Activated CD4-positive, alpha-beta memory T cell treated with anti-CD3 and anti-CD28 coated beads, Interleukin-2, amount 10 ng/mL, durations not matched to agents 7 days and 5 days (primary cell): ENCODE measurements at regions of chr14 and their contacts with region 1.

Region 1: DNA sequence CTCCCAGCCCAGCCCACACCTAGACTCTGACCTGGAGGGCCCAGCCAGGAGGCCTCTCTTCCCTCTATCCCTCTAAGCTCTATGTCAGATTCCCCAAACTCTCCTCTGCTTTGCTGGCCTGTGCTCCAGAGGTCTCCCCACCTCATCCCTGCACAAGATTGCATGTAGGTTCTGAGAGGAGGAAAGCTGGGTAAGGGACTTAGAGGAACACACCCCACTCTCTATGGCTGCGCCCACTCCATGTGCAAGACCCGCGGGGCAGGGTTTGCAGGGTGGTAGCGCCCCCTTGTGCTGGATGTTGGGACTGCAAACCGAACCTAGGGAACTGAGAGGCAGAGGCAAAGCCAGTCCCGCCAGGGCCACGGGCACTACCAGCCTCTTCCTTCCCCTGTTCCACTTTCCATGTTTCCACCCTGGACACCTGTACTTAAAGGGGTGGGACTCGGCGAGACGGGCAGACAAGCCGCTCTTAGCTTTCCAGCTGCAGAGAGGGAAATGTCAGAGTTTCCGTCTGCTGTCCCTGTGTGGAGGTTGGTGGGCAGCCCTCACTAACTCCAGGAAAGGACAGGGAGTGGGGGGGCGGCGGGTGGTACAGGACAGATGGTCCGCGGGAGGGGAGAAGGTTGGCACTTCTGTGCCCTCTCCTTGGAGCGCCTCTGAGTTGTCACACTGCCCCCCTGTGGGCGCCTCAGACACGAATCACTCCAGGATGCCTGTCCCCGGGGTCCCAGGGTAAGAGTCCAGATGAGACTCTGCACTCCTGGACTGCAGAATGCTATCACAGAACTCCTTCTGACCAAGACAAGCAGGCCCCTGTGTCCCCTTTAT is 16.8 kb downstream of the MMP14 start:
- DNase-seq: peak; percentile 90
- H3K4me3 Mint-ChIP-seq: peak overlapping the region; percentile 68
- H3K27ac Mint-ChIP-seq: peak overlapping the region; percentile 44
- H3K4me1 Mint-ChIP-seq: peaks cover 46% of the 10 kb centered on the region
- H3K27me3 Mint-ChIP-seq: peaks cover 23% of the 10 kb centered on the region

Region 2: GRCh38 chr14:22822571-22823098 is 30.5 kb before region 1 on chr14:
- CTCF ChIA-PET with region 1: interaction called, 195 read pairs
- POLR2A ChIA-PET with region 1: interaction called, 5 read pairs
- DNase-seq: peak; percentile 71
- H3K4me3 Mint-ChIP-seq: peak overlapping the region; percentile 39
- H3K27ac Mint-ChIP-seq: no peak overlapping the region
- H3K4me1 Mint-ChIP-seq: peaks cover 36% of the 10 kb centered on the region
- H3K27me3 Mint-ChIP-seq: peaks cover 19% of the 10 kb centered on the region

Region 3: GRCh38 chr14:22836301-22837113 is 16.6 kb before region 1 on chr14 and contains the start of gene MMP14:
- CTCF ChIA-PET with region 1: interaction called, 62 read pairs
- POLR2A ChIA-PET with region 1: interaction called, 5 read pairs
- DNase-seq: no peak
- H3K4me3 Mint-ChIP-seq: no peak within 1 kb of the TSS
- H3K27ac Mint-ChIP-seq: no peak within 1 kb of the TSS
- H3K4me1 Mint-ChIP-seq: peaks cover 11% of the 10 kb centered on the region
- H3K27me3 Mint-ChIP-seq: peaks cover 15% of the 10 kb centered on the region
- total RNA-seq, gene MMP14: 1.9 to 2.9 TPM

Region 4: DNA sequence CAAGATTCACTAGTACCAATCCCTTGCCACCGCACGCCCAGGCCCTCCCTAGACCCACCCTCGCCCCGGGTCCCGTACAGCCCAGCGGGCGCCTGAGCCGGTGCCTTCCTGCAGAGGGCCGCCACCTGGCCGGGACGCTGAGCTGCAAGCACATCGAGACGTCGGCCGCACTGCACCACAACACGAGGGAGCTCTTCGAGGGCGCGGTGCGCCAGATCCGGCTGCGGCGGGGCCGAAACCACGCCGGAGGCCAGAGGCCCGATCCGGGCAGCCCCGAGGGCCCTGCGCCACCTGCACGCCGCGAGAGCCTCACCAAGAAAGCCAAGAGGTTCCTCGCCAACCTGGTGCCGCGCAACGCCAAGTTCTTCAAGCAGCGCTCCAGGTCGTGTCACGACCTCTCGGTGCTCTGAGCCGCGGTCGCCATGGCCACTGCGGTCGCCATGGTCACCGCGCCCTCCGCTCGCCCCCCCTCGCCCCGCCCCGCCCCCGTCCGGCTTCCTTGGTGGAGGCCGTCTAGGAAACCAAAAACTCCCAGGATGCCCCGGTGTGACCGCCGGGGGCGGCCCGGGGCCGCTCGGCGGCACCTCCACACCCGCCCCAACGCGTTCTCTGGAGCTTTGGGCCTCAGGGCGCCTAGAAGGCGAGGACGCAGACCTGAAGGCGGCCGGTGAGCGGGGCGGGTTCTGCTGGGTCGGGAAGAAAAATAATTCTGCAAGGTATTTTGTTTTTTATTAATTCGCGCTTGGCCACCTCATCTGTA is 33.5 kb after region 1 on chr14:
- CTCF ChIA-PET with region 1: interaction called, 12 read pairs
- POLR2A ChIA-PET with region 1: interaction called, 7 read pairs
- DNase-seq: peak; percentile 85
- H3K4me3 Mint-ChIP-seq: peak overlapping the region; percentile 84
- H3K27ac Mint-ChIP-seq: peak overlapping the region; percentile 89
- H3K4me1 Mint-ChIP-seq: peaks cover 44% of the 10 kb centered on the region
- H3K27me3 Mint-ChIP-seq: peaks cover 23% of the 10 kb centered on the region